K562 (cell line): ENCODE measurements at regions of chr19 and their contacts with region 1.

Region 1: GRCh38 chr19:907183-907853 is 5.7 kb downstream of the R3HDM4 start:
- DNase-seq: peak; percentile 79 to 99 (median 89)
- ATAC-seq: peak; percentile 82
- H3K4me3 ChIP-seq: peak overlapping the region; percentile 18
- H3K27ac ChIP-seq: peak overlapping the region; percentile 95
- H3K4me1 ChIP-seq: peaks cover 43 to 83% of the 10 kb centered on the region in 2 experiments
- H3K27me3 ChIP-seq: no peaks in the 10 kb centered on the region
- CTCF ChIP-seq: peak in 2 of 3 experiments; percentile 14 to 32; a peak in 3 of 6 replicates
- EP300 ChIP-seq: peak; percentile 97
- POLR2A ChIP-seq: peak; percentile 60; the same call in 1 of the 2 replicates
- RAD21 ChIP-seq: peak; percentile 25 to 38; a peak in 3 of 4 replicates

Region 2: GRCh38 chr19:892243-893050 is 14.9 kb before region 1 on chr19:
- CTCF ChIA-PET with region 1: no interaction called
- POLR2A ChIA-PET with region 1: interaction called, 21 read pairs
- in situ Hi-C with region 1: no loop called
- intact Hi-C with region 1: loop called (anchors 2 kb)
- DNase-seq: peak in 2 of 4 experiments; percentile 87 to 88
- ATAC-seq: peak; percentile 53
- H3K4me3 ChIP-seq: peak overlapping the region; percentile 79
- H3K27ac ChIP-seq: peak overlapping the region; percentile 100
- H3K4me1 ChIP-seq: peaks cover 9 to 68% of the 10 kb centered on the region in 2 experiments; a peak in 4 of 5 replicates
- H3K27me3 ChIP-seq: no peaks in the 10 kb centered on the region
- CTCF ChIP-seq: no peak
- EP300 ChIP-seq: no peak
- POLR2A ChIP-seq: no peak
- RAD21 ChIP-seq: no peak